Heart left ventricle (tissue), 16 donors: ENCODE measurements at regions of chr5 and their contacts with region 1.

Region 1: DNA sequence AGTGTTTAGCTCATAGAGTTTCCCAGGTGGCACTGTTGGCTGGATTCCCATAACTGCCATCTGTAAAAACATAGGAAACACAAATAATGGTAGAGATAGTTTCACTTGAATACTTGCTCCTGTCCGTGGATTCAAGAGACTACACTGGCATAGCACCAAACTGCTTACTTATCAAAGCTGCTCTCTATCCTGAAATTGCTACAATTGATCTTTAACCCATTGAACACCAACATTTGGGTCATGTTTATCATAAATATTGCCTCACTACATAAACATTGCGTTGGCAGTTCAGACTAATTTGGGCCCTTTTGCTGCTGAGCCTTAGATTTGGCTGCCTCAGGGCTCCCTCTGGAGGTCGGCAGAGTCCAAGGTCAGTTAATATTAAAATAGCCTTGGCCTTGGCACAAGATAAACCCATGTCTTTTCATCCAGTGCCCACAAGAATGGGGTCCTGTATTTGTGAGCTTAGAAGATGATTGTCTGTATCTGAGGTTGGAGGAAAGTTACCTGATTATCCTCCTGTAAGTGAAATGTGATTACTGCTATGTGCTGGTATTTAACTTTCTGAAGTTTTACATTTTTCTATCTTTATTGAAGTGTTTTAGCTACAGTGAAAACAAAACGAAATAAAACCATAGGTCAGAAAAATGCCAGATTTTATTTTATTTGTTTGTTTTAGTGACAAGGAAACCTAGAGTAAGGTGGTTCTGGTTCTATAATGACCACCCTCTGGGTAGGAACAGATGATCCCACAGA is 4.0 kb upstream of the RANBP3L start:
- DNase-seq: peak; percentile 41 to 48 (median 47)
- ATAC-seq: peak; percentile 68 to 86 (median 80)
- H3K4me3 ChIP-seq: no peak overlapping the region
- H3K27ac ChIP-seq: no peak overlapping the region
- H3K4me1 ChIP-seq: peaks cover 0 to 27% (median 10%) of the 10 kb centered on the region in 12 donors
- H3K27me3 ChIP-seq: no peaks in the 10 kb centered on the region
- CTCF ChIP-seq: peak; percentile 38 to 79 (median 68)
- POLR2A ChIP-seq: no peak

Region 2: DNA sequence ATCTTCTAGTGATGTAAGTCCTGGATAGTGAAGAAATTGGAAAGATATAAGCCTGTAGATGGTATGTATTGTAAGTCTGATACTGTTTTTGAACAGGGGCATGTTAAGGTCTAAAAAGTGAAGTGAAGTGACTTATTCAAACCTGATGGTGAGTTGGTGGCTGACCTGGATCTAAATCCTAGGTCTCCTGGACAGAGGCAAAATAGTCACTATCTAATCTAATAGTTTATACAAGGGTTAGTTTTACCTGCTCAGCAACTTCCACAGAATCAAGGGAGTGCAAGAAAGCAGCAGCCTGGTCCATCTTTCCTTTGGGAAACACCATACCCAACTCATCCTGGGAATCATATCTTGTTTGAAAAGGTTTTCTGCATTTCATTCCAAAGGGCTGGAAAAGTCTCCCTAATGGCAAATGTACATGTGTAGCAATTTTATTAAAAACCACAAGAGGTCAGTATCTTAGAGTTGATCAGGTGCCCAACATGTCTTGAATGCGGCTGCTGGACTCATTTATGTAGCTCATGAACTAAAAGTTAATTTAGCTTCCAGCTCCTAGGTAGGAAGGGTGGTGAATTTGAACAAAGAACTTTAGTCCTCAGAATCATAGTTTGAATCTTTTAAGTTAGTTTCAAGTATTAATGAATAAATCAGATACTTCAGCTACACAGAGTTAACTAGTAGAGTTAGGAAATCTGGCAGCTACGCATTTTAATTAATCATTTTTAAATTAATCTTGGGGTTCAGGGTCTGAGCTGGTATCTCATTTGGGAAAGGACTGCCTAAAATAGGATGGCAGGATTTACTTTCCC is 127.8 kb before region 1 on chr5:
- intact Hi-C with region 1: loop called in 9 of 10 experiments (anchors 2 to 10 kb)
- DNase-seq: no peak
- ATAC-seq: peak in 1 of 4 donors; percentile 60
- H3K4me3 ChIP-seq: no peak overlapping the region
- H3K27ac ChIP-seq: no peak overlapping the region
- H3K4me1 ChIP-seq: no peaks in the 10 kb centered on the region
- H3K27me3 ChIP-seq: no peaks in the 10 kb centered on the region
- CTCF ChIP-seq: peak; percentile 33 to 68 (median 50)
- POLR2A ChIP-seq: no peak

Region 3: GRCh38 chr5:36241631-36242533 is 63.9 kb before region 1 on chr5 and contains the start of gene NADK2:
- intact Hi-C with region 1: loop called in 3 of 10 experiments (anchors 10 kb)
- DNase-seq: peak; percentile 96 to 97 (median 96)
- ATAC-seq: peak; percentile 93 to 96 (median 94)
- H3K4me3 ChIP-seq: peak within 1 kb of the TSS; percentile 46 to 97 (median 90)
- H3K27ac ChIP-seq: peak within 1 kb of the TSS; percentile 86 to 99 (median 96)
- H3K4me1 ChIP-seq: peaks cover 0 to 44% (median 36%) of the 10 kb centered on the region in 12 donors
- H3K27me3 ChIP-seq: no peaks in the 10 kb centered on the region
- CTCF ChIP-seq: peak; percentile 65 to 89 (median 72)
- POLR2A ChIP-seq: peak; percentile 70 to 86
- total RNA-seq, gene NADK2: 25.8 to 41.8 (median 37.2) TPM

Region 4: GRCh38 chr5:36264202-36264760 is 41.5 kb before region 1 on chr5:
- intact Hi-C with region 1: loop called in 9 of 10 experiments (anchors 2 to 5 kb)
- DNase-seq: no peak
- ATAC-seq: no peak
- H3K4me3 ChIP-seq: no peak overlapping the region
- H3K27ac ChIP-seq: no peak overlapping the region
- H3K4me1 ChIP-seq: no peaks in the 10 kb centered on the region
- H3K27me3 ChIP-seq: no peaks in the 10 kb centered on the region
- CTCF ChIP-seq: no peak
- POLR2A ChIP-seq: no peak

Region 5: DNA sequence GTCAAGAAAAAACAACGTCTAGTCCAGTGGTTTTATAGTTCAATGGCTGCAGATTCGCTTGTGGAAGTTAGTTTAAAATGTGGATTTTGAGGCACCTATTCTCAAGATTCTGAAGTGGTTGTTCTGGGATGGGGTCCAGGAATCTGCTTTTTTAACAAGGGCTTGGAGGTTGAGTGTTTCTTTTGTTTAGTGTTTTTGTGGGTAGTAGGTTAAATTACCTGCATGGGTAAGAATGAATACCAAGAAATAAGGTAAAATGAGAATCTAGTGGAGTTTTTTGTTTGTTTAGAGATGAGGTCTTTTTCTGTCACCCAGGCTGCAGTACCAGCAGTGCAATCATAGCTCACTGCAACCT is 35.6 kb before region 1 on chr5:
- intact Hi-C with region 1: loop called in 9 of 10 experiments (anchors 2 to 5 kb)
- DNase-seq: no peak
- ATAC-seq: no peak
- H3K4me3 ChIP-seq: no peak overlapping the region
- H3K27ac ChIP-seq: no peak overlapping the region
- H3K4me1 ChIP-seq: peaks cover 0 to 12% (median 0%) of the 10 kb centered on the region in 12 donors
- H3K27me3 ChIP-seq: no peaks in the 10 kb centered on the region
- CTCF ChIP-seq: no peak
- POLR2A ChIP-seq: no peak

Region 6: GRCh38 chr5:36373527-36374086 is 67.9 kb after region 1 on chr5:
- intact Hi-C with region 1: no loop called
- DNase-seq: peak in 4 of 5 donors; percentile 34 to 79 (median 56)
- ATAC-seq: peak; percentile 66 to 94 (median 88)
- H3K4me3 ChIP-seq: no peak overlapping the region
- H3K27ac ChIP-seq: peak overlapping the region in 6 of 12 donors; percentile 23 to 76 (median 32)
- H3K4me1 ChIP-seq: peaks cover 0 to 19% (median 0%) of the 10 kb centered on the region in 12 donors
- H3K27me3 ChIP-seq: no peaks in the 10 kb centered on the region
- CTCF ChIP-seq: no peak
- POLR2A ChIP-seq: no peak